BJ (cell line): ENCODE measurements at regions of chr3 and their contacts with region 1.

Region 1: DNA sequence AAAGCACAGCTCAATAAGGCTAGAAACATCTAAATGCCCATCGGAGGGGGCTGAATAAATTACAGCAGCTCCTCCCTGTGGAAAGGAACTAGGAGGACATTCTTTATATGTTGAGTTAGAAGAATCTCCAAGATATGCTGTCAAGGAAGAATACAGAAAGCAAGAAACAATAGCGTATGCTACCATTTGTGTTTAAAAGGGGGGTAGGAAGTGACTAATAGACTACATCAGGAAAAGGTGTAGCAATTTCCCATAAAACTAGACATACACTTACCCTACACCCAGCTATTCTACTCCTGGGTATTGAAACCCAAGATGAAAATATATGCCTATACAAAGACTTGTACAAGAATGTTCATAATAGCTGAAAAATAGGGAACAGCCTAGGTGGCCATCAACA is 21.6 kb downstream of the SEC61A1 start:
- DNase-seq: no peak
- H3K4me3 ChIP-seq: no peak overlapping the region
- H3K27me3 ChIP-seq: no peaks in the 10 kb centered on the region
- CTCF ChIP-seq: no peak

Region 2: DNA sequence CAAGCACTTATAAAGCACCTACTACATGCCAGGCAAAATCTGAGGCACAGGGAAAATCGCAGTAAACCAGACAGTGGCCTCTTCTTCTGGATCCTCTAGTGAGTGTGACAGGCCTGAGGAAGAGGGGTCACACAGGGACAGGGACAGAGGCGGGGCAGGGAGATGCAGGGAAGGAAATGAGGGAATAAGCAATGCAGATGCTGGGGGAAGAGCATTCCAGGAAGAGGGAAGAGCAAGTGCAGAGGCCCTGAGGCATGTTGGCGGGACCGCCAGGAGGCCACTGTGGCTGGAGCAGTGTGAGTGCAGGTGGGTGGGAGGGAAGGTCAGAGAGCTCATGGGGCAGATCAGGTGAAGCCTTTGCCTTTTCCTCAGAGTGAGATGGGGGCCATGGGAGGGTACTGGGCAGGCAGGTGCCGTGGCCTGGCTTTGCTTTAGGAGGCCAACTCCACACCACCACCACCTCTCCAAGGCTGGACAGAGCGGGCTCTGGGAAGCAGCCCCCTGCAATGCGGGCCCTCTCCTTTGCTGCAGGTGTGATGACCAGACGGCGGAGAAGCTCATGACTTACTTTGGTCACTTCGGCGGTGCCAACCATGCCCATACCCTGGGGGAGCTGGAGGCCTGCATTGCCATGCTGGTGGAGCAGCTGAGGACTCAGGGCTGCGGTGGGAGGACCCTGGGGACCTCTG is 960.0 kb after region 1 on chr3:
- CTCF ChIA-PET with region 1: no interaction called
- POLR2A ChIA-PET with region 1: interaction called, 19 read pairs
- DNase-seq: no peak
- H3K4me3 ChIP-seq: no peak overlapping the region
- H3K27me3 ChIP-seq: peaks cover 14% of the 10 kb centered on the region
- CTCF ChIP-seq: no peak